Posterior cingulate gyrus (tissue), 11 donors: ENCODE measurements at regions of chrX and their contacts with region 1.

Region 1: GRCh38 chrX:13898083-13898482 is 81.2 kb upstream of the GPM6B start:
- DNase-seq: peak in 2 of 10 donors; percentile 32 to 44

Region 2: DNA sequence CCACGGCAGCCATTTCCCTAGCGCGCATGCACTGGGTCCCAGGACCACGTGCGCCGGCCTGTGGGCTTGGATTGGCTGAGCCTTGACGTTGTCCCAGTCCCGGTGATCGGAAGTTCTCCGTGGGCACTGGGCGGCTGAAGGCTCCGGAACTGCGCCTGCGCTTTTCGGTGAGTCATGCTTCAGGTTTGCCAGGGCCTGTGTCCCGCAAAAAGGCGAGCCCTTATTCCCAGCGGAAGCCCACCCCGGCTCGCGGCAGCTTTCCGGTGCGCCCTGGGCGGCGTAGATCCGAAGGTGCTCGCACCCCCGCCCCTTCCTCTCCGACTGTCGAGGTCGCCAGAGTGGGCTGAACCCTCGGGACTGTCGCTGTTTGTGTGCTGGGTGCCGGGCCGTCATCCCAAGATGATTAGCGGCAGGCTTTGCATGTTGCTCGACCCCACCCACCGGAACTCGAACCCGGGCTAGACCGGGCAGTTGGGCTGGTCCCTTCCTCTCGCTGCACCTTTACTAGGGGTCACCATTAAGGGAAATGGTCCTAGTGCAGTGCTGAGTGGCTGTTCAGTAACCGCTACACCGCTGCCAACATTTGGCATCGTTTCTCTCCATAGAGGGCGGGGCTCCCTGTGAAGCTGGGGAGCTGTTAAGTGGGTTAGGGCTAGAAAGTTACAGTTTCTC is 244.9 kb before region 1 on chrX and contains the start of gene TCEANC:
- intact Hi-C with region 1: loop called (anchors 10 kb)
- DNase-seq: peak; percentile 87 to 99 (median 92)

Region 3: DNA sequence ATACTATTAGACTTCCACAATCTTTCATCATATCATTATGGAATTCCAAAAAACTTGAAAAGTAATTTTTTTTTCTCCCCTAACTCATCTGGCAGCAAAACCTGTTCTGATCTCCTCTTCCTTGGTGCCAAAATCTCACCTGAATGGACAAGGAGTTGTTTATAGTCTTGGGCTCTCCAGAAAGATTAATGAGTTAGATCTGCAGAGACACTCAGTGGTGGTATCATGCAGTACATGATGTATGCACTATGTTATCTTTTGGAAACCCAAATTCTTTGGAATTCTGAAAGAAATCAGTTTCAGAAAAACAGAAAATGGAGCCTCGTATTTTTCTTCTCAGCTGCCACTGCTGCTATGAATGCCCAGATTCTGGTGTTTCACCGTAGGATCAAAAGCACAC is 92.8 kb before region 1 on chrX:
- intact Hi-C with region 1: no loop called
- DNase-seq: no peak

Region 4: GRCh38 chrX:13938051-13938828 is 40.2 kb after region 1 on chrX:
- intact Hi-C with region 1: no loop called
- DNase-seq: peak in 8 of 10 donors; percentile 17 to 89 (median 50)

Region 5: DNA sequence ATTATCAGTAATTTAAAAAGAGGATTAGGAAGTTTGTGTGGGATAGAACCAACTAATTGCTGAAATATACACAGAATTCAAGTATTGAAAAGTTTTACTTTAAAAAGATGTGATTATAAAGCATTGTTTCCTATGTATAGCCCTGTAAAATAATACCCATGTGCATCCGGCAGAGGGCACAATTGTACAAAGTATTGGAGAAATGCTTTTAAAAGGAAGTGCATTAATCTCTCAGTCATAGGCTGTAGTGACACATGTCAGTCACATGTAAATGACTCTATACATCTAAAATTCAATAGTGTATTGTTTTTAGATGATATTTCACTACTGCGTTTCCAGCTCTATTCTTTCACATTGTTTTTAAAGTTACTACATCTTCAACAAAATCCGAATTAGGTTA is 141.3 kb after region 1 on chrX:
- intact Hi-C with region 1: no loop called
- DNase-seq: peak in 5 of 10 donors; percentile 14 to 49 (median 26)

Region 6: DNA sequence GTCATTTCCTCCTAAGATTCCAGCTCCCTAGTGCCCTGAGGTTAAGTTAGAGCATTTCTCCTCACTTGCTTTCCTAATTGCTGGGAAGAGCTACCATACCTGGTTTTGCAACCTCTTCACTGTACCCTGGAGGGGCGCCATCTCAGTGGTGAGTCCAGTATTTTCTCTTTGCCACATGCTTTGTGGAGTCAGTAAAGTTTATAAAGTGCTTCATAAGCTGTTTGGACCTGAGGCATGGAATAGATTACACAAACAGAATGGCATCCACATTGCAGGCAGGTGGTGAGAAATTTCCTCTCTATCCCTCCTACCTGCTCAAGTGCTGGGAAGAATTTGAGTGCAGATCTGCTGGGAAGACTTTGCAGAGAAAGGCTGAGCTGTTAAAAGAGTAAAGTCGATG is 235.8 kb after region 1 on chrX:
- intact Hi-C with region 1: no loop called
- DNase-seq: no peak